OCI-LY7 (cell line): ENCODE measurements at regions of chr11 and their contacts with region 1.

Region 1: DNA sequence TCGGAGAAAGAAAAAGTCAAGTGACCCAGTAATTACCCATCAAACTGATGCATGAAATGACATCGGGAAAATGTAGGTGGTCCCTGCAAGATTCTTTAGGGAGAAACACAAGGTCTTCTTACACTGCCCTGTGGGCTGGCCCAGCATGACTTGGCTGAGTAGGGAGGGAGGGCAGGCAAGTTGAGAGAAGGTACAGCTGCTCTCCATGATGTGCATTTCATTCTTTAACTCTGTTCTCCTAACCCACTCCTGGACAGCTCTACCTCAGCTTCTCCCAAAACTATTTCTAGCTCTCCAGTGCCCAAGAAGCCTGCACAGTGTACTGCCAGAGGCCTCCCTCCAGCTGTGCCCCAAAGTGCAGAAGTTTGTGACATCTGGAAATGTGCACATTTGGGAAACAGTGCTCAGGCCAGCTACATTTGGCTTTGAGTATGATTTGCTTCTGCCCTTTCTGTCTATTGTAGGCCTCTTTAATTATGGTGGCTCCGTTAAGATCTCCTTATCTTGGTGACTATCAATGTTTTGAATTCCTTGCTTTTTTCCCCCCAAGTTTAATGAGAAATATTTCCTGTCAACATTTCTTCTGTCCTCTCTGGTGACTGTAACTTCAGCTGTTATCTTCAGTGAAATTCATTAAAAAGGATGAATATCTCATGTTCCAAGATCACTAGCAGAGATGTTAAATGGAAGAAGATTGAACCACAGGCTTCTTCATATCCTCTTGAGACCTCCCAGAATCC is 26.7 kb upstream of the PRSS23 start:
- DNase-seq: no peak
- H3K4me3 ChIP-seq: no peak overlapping the region
- H3K27ac ChIP-seq: no peak overlapping the region
- H3K4me1 ChIP-seq: no peaks in the 10 kb centered on the region
- CTCF ChIP-seq: no peak

Region 2: GRCh38 chr11:84855500-84856245 is 1918.0 kb before region 1 on chr11:
- CTCF ChIA-PET with region 1: no interaction called
- POLR2A ChIA-PET with region 1: interaction called, 11 read pairs
- intact Hi-C with region 1: no loop called
- DNase-seq: no peak
- H3K4me3 ChIP-seq: no peak overlapping the region
- H3K27ac ChIP-seq: no peak overlapping the region
- H3K4me1 ChIP-seq: no peaks in the 10 kb centered on the region
- CTCF ChIP-seq: no peak

Region 3: DNA sequence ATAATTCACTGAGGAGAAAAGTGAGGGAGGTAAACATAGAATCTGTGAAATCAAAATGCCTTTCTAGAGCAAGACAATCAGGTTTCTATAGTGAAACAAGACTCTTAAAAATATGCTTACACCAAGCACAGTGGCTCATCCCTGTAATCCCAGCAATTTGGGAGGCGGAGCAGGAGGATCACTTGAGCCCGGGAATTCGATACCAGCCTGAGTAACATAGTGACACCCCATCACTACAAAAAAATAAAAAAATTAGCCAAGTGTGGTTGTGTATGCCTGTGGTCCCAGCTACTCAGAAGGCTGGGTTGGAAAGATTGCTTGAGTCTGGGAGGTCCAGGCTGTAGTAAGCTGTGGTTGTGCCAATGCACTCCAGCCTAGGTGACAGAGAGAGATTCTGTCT is 58.1 kb before region 1 on chr11:
- CTCF ChIA-PET with region 1: no interaction called
- POLR2A ChIA-PET with region 1: no interaction called
- intact Hi-C with region 1: no loop called
- DNase-seq: no peak
- H3K4me3 ChIP-seq: no peak overlapping the region
- H3K27ac ChIP-seq: no peak overlapping the region
- H3K4me1 ChIP-seq: no peaks in the 10 kb centered on the region
- CTCF ChIP-seq: no peak